ENCODE measurements at regions of chr1 and their contacts with region 1.

Region 1: GRCh38 chr1:31715087-31715872 is 11.5 kb upstream of the COL16A1 start:
- DNase-seq: peak; percentile 80 to 97
- H3K4me3 ChIP-seq: peak overlapping the region; percentile 46 to 64
- H3K27ac ChIP-seq: peak overlapping the region; percentile 96
- H3K4me1 ChIP-seq: peaks cover 17 to 39% of the 10 kb centered on the region in 2 donors
- H3K27me3 ChIP-seq: no peaks in the 10 kb centered on the region
- CTCF ChIP-seq: peak; percentile 85 to 95 (median 90)

Region 2: DNA sequence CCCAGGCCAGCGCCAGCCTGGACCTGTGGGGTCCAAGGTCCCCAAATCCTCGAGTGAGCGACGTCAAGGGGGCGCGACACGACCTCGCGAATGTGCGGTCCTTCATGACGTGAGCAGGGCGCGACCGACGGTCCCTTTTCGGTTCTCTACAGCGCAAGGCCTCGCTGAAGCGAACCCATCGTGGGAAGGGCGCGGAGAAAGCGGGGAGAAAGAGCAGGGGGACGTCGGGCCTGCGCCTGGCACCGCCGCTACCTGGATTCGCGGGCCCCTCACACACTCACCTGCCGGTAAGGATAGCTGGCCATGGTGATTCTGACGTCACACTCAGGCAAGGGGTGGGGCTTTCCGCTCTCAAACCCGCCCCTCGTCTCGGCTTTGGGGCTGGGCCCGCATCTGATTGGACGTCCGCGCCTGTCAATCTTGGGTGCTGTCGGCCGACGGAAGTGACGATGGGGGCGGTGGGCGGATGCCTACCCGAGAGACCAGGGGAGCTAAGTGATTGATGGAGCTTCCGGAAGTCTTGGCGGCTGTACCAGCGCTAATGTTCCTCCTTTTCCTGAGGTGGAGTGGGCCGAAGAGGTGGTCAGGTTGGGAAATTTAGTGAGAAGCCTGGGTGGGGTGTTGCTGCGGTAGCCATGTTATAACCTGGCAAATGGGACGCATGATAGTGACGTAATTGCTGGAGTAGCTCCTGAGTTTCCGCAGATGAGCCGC is 70.6 kb before region 1 on chr1 and contains the start of gene PEF1:
- intact Hi-C with region 1: loop called (anchors 2 kb)
- DNase-seq: peak; percentile 93 to 99
- H3K4me3 ChIP-seq: peak within 1 kb of the TSS; percentile 78 to 85
- H3K27ac ChIP-seq: peak within 1 kb of the TSS; percentile 95 to 97
- H3K4me1 ChIP-seq: peaks cover 10 to 53% of the 10 kb centered on the region in 2 donors
- H3K27me3 ChIP-seq: no peaks in the 10 kb centered on the region
- CTCF ChIP-seq: no peak
- total RNA-seq, gene PEF1: 340 TPM

Region 3: GRCh38 chr1:31669786-31670592 is 45.3 kb before region 1 on chr1:
- intact Hi-C with region 1: loop called (anchors 2 kb)
- DNase-seq: peak; percentile 41 to 91
- H3K4me3 ChIP-seq: peak overlapping the region; percentile 46 to 55
- H3K27ac ChIP-seq: peak overlapping the region; percentile 81 to 83
- H3K4me1 ChIP-seq: peaks cover 4 to 38% of the 10 kb centered on the region in 2 donors
- H3K27me3 ChIP-seq: no peaks in the 10 kb centered on the region
- CTCF ChIP-seq: peak; percentile 23 to 26 (median 24)

Region 4: DNA sequence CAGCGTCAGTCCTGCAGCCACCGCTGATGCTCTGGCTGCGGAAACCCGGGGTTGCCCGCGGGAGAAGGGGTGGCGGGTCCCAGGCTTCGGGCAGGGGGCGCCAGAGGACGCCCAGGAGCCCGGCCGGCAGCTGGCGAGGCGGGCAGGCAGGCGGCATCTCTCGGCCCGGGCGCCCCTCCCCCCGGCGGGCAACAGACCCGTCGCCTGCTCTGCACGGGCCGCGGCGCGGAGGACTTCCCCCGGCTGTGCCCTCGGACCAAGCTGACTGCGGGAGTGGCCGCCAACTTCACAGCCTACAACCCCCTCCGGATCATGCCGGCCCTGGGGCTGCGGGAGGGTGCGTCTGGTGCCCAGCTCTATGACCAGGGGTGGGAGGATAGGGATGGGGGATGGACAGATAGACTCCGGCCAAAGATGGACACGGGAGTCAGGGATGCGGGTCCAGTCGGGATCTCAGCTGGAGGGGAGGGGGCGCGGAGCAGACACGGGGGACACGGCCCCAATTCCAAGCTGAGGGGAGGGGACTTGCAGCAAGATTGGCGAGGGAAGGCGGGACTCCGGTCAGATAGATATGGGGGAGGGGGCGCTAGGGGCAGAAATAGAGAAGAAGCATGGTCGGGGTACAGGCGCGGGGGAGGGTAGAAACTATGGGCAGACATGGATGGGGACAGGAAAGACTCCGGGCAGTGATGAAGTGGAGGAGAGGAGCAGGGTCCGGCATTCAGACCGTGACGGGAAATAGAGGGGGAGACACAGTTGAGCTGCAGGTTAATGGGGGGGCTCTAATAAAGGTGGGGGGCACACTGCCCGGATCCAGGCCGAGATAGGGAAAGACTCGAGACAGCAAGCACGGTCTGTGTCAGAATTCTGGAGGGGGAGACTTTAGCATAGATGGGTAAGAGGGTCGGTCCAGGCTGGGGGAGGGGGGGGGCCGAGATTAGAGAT is 47.7 kb after region 1 on chr1:
- intact Hi-C with region 1: loop called (anchors 2 kb)
- DNase-seq: peak in 1 of 2 donors; percentile 82
- H3K4me3 ChIP-seq: peak overlapping the region; percentile 63 to 86
- H3K27ac ChIP-seq: no peak overlapping the region
- H3K4me1 ChIP-seq: peaks cover 10 to 31% of the 10 kb centered on the region in 2 donors
- H3K27me3 ChIP-seq: no peaks in the 10 kb centered on the region
- CTCF ChIP-seq: peak; percentile 62 to 73 (median 68)

Region 5: DNA sequence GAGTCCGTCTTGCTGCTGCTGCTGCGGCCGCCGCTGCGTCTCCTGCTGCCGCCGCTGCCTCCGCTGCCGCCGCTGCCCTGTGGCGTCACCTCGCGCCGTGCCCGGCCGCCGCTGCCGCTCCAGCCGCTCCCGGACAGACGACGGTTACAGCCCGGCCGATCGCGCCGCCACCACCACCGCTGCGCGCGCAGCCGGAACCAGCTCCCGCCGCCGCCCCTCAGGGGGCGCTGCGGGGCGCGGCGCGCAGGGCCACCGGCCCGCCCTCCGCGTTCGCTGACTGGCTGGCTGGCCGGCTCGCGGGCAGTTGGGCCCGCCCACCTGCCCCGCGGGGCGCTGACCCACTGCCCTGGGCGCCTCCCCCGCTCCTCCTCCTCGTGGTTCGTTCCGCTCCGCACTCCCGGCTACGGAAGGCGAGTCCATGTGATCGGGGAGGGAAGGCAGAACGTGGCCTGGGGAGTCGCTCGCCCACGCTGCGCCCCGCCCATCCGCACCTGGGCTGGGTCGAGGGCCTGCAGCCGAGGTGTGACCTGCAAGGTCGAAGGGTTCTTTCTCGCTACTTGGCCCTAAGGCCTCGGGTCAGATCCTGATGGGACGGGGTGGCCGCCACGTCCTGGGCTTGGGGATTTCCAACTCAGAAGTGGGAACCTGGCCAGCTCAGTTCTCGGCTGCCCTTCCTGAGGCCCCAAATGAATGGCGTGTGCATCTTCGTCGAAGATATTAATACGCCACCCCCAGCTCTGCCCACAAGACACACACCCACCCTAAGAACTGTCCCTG is 223.1 kb after region 1 on chr1 and contains the start of gene PTP4A2:
- intact Hi-C with region 1: no loop called
- DNase-seq: peak; percentile 77 to 95
- H3K4me3 ChIP-seq: peak within 1 kb of the TSS; percentile 70 to 85
- H3K27ac ChIP-seq: peak within 1 kb of the TSS; percentile 94 to 97
- H3K4me1 ChIP-seq: peaks cover 12 to 26% of the 10 kb centered on the region in 2 donors
- H3K27me3 ChIP-seq: no peaks in the 10 kb centered on the region
- CTCF ChIP-seq: peak in 1 of 3 experiments; percentile 98
- total RNA-seq, gene PTP4A2: 174 TPM

Region 6: DNA sequence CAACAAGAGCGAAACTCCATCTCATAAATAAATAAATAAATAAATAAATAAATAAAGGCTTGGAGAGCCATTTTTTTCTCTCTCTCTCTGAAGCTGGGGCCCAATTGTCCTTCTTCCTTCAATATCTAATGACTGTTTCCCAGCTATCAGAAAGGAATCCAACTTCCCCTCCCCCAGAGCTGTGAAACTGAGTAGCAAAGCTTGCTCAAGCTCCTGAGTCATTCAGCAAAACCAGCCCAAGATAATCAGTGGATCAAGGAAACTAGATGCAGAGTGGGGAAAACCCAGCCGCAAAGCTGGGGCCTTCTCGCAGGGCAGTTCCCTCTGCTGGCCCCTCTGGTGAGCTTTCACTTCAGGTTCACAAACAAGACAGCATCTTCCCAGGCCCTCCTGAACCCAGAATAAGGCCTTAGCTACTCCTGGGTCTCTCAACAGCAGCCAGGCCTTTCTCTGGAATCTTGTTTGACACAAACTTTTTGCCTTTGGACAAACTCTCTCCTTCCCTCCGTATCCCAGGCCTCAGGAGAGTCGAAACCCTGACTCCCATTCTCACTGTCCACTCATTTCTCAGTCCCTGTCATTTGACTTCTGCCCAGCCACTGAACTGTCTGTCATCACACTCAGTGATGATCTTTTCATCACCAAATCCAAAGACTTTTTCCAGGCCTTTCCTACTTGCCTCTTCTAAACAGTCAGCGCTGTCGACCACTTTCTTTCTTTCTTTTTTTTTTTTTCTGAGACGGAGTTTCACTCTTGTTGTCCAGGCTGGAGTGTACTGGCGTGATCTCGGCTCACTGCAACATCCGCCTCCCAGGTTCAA is 240.8 kb after region 1 on chr1:
- intact Hi-C with region 1: loop called (anchors 5 kb)
- DNase-seq: peak; percentile 77 to 95
- H3K4me3 ChIP-seq: peak overlapping the region in 1 of 2 donors; percentile 26
- H3K27ac ChIP-seq: peak overlapping the region; percentile 85 to 90
- H3K4me1 ChIP-seq: peaks cover 23 to 34% of the 10 kb centered on the region in 2 donors
- H3K27me3 ChIP-seq: no peaks in the 10 kb centered on the region
- CTCF ChIP-seq: peak; percentile 19 to 52 (median 39)

Measured in ascending aorta (tissue), 2 donors.